Right cardiac atrium (tissue), 5 donors: ENCODE measurements at regions of chr4 and their contacts with region 1.

Region 1: GRCh38 chr4:48779998-48780742 is at the start of gene FRYL:
- DNase-seq: peak; percentile 99 to 100 (median 99)
- ATAC-seq: peak; percentile 98
- H3K4me3 ChIP-seq: peak within 1 kb of the TSS; percentile 96
- H3K27ac ChIP-seq: peak within 1 kb of the TSS; percentile 94
- H3K4me1 ChIP-seq: no peaks in the 10 kb centered on the region
- H3K27me3 ChIP-seq: no peaks in the 10 kb centered on the region
- total RNA-seq, gene FRYL: 40.3 to 50.7 (median 43.9) TPM

Region 2: DNA sequence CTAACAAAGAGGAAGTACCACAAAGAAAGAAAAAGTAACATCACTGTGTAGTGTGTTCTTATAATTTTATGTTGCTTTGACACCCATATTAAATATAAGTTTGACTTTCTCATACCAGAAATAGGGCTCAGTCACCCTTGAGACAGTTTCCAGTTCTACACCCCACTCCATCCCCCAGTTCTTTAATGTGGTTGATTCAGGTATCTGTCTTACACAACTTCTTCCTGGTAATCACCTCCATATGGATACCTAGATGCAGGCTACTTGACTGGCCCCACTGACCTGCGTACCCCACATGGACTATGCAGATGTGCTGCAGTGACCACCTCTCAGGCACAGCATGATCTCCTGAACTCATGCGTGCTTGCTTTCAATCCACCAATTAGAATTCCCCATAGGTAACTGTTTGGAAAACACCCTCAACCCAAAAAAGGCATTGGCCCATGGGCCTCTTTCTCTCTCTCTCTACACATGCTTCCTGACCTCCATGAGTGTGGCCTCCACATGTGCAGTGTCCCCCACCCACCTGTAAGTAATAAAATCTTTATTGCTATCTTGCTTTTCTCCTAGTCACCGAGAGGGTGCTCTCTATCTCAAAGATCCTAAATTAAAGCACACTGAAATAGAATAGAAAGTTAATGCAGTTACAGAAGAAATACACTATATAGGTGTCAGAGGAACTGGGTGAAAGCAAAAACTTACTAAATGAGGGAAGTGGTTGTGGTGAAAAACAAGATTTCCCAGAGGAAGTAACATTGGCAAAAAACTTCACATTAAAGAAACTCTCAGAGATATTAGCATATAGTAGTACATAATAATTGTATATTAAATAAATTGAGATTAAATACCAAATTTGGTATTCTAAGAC is 191.7 kb before region 1 on chr4:
- intact Hi-C with region 1: loop called in 1 of 4 experiments (anchors 10 kb)
- DNase-seq: no peak
- ATAC-seq: no peak
- H3K4me3 ChIP-seq: no peak overlapping the region
- H3K27ac ChIP-seq: no peak overlapping the region
- H3K4me1 ChIP-seq: no peaks in the 10 kb centered on the region
- H3K27me3 ChIP-seq: no peaks in the 10 kb centered on the region

Region 3: GRCh38 chr4:48681856-48682255 is 98.3 kb before region 1 on chr4:
- intact Hi-C with region 1: loop called in 1 of 4 experiments (anchors 10 kb)
- DNase-seq: no peak
- ATAC-seq: peak; percentile 24 to 63
- H3K4me3 ChIP-seq: no peak overlapping the region
- H3K27ac ChIP-seq: no peak overlapping the region
- H3K4me1 ChIP-seq: no peaks in the 10 kb centered on the region
- H3K27me3 ChIP-seq: no peaks in the 10 kb centered on the region

Region 4: DNA sequence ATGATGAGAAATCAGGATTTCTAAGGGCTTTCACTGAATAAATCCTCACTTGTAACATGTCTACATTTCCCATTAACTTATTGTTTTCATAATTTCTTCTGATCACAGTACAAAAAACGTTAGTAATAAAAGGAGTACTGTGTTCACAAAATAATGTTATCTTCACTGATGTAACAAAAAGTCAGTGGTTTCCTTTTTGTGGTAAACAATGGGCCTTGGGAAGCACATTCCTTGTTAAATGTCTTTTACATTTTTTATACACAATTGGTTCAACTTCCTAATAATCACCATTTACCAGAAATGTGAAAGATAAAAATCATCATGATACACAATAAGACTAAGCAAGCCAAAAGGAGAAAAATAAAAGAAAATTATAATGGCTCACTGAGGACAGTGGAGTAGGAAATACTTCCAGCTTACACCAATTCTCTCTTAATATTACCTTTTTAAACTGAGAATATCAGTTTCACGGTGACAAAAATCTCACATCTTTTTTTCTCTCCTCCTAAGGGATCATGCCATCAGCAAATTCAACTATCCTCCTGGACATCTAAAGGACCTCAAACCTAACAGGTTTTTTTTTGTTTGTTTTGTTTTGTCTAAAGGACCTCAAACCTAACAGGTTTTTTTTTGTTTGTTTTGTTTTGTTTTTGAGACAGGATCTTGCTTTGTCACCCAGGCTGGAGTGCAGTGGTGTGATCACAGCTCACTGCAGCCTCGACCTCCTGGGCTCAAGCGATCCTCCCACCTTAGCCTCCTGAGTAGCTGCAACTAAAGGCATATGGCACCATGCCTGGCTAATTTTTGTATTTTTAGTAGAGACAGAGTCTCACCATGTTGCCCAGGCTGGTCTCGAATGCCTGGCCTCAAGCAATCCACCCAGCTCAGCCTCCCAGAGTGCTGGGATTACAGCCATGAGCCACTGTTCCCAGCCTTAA is 57.4 kb before region 1 on chr4:
- intact Hi-C with region 1: loop called in 1 of 4 experiments (anchors 10 kb)
- DNase-seq: no peak
- ATAC-seq: peak in 1 of 2 donors; percentile 44
- H3K4me3 ChIP-seq: no peak overlapping the region
- H3K27ac ChIP-seq: no peak overlapping the region
- H3K4me1 ChIP-seq: peaks cover 8% of the 10 kb centered on the region
- H3K27me3 ChIP-seq: no peaks in the 10 kb centered on the region

Region 5: DNA sequence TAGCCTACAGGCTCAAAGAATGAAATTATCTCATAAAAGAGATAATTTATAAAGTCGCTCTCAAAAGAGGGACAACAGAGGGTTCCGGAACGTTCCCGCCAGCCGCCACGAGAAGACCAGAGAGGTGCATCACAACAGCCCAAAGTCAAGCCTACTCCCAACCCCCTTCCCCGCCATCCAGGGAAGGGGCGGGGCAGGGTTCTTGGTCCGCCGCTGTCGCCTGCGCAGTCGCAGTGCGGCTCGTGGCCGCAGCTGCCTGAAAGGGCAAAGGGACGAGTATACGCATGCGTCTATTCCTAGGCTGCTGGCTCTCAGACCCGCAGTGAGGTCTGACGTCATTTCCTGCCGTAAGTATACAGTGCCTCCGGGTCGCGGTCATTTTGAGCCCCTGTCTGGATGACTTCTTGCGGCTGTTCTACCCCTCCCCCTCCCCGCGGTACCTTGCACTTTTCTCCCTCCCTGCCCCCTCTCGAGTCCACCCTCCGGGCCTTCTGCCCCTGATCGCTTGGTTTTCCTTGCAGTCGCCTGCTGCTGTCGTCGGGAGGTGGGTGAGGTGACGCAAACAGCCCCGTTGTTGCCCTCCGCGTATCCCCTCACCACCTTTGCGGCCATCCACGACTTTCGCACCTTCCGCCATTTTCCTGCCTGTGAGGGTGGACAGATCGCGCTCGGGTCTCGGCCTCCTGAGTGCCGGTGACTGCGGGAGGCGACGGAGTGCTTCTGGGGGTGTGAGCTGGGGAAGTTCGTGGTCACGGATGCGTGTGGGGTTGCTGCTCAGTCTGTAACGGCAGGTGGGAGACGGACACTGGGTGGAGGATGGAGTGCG is 50.7 kb after region 1 on chr4 and contains the start of gene OCIAD1:
- intact Hi-C with region 1: loop called in 1 of 4 experiments (anchors 5 kb)
- DNase-seq: peak; percentile 97 to 98 (median 98)
- ATAC-seq: peak; percentile 100
- H3K4me3 ChIP-seq: peak within 1 kb of the TSS; percentile 79
- H3K27ac ChIP-seq: peak within 1 kb of the TSS; percentile 92
- H3K4me1 ChIP-seq: no peaks in the 10 kb centered on the region
- H3K27me3 ChIP-seq: no peaks in the 10 kb centered on the region
- total RNA-seq, gene OCIAD1: 150 to 155 (median 151) TPM

Region 6: DNA sequence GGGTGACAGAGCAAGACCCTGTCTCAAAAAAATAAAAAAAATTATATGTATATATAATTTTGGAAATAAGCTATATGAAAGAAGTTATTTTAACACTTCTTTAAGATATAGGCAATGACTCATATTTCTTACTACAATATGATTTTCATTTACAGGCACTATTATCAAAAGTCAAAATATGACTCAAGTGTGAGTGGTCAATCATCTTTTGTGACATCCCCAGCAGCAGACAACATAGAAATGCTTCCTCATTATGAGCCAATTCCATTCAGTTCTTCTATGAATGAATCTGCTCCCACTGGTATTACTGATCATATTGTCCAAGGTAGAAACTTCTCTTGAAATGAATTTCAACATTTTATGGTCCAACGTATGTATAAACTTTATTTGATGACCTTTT is 71.5 kb after region 1 on chr4:
- intact Hi-C with region 1: no loop called
- DNase-seq: no peak
- ATAC-seq: no peak
- H3K4me3 ChIP-seq: no peak overlapping the region
- H3K27ac ChIP-seq: no peak overlapping the region
- H3K4me1 ChIP-seq: no peaks in the 10 kb centered on the region
- H3K27me3 ChIP-seq: no peaks in the 10 kb centered on the region